MCF 10A (cell line): ENCODE measurements at regions of chr19 and their contacts with region 1.

Region 1: DNA sequence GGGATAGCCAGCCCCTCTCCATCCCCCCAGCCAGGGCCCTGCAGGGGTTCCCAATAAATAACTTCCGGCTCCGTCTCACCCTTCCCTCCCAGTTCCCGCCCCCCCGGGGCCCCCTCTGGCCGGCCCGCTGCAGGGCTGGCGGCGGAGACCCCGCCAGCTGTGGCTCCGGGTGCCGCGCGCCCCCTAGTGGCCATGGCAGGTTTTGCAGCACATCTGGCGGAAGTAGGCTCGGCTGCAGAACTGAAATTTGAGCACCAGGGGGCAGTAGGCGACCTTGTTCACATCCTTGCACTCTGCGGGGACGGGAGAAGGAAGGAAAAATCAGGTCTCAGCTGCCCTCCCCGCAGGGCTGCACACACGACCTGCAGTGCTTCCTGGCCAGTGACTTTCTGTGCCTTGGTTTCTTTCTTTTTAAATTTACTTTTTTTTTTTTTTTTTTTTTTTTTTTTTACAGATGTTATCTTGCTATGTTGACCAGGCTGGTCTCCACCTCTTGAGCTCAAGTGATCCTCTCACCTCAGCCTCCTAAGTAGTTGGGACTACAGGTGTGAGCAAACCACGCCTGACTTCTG is 3.6 kb upstream of the MYO1F start:
- DNase-seq: peak; percentile 82
- H3K4me3 Mint-ChIP-seq: no peak overlapping the region
- H3K27ac Mint-ChIP-seq: no peak overlapping the region
- H3K4me1 Mint-ChIP-seq: peaks cover 10% of the 10 kb centered on the region
- H3K27me3 Mint-ChIP-seq: peaks cover 10% of the 10 kb centered on the region
- CTCF ChIP-seq: peak; percentile 99

Region 2: GRCh38 chr19:8116437-8117293 is 464.1 kb before region 1 on chr19:
- CTCF ChIA-PET with region 1: no interaction called
- POLR2A ChIA-PET with region 1: no interaction called
- intact Hi-C with region 1: no loop called
- DNase-seq: peak; percentile 39
- H3K4me3 Mint-ChIP-seq: no peak overlapping the region
- H3K27ac Mint-ChIP-seq: no peak overlapping the region
- H3K4me1 Mint-ChIP-seq: peaks cover 6% of the 10 kb centered on the region
- H3K27me3 Mint-ChIP-seq: no peaks in the 10 kb centered on the region
- CTCF ChIP-seq: no peak

Region 3: DNA sequence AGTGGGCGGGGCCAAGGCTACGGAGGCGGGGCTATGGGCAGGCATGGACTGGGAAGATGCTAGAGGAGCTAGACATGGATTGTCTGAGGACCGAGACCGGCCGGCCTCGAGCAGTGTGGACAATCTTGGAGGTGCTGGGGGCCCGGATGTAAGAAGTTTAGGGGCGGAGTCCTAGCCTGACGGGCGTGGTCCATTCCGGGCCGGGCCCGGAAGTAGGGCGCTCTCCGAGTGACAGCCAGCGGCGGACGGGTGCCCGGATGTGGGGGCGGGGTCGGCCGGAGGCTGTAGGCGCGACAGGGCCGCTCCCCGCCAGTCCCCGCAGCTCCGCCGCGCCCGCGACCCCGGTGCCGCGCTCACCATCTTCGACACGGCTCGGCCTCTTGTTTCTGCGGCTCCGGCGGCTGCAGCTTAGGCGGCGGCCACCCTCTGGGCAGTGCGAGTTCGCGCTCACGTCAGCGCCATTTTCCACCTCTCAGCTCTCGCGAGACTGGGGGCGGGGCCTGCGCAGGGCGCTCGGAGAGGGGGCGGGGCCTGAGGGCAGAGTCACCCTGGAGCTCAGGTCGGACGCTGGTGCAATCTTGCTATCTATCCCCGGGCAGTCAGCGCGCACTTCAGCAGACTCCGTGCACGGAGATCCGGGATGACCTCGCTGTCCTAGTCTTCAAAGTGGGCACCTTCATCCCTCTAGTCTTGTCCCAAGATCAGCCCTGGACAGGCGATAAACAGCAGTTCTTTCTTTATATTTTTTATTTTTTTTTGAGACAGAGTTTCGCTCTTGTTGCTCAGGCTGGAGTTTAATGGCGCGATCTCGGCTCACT is 66.9 kb before region 1 on chr19 and contains the start of gene ZNF414:
- CTCF ChIA-PET with region 1: interaction called, 28 read pairs
- POLR2A ChIA-PET with region 1: interaction called, 4 read pairs
- intact Hi-C with region 1: no loop called
- DNase-seq: peak; percentile 98
- H3K4me3 Mint-ChIP-seq: peak within 1 kb of the TSS; percentile 85
- H3K27ac Mint-ChIP-seq: peak within 1 kb of the TSS; percentile 99
- H3K4me1 Mint-ChIP-seq: peaks cover 15% of the 10 kb centered on the region
- H3K27me3 Mint-ChIP-seq: no peaks in the 10 kb centered on the region
- CTCF ChIP-seq: no peak
- total RNA-seq, gene ZNF414: 16.3 and 27.2 TPM in 2 replicates

Region 4: DNA sequence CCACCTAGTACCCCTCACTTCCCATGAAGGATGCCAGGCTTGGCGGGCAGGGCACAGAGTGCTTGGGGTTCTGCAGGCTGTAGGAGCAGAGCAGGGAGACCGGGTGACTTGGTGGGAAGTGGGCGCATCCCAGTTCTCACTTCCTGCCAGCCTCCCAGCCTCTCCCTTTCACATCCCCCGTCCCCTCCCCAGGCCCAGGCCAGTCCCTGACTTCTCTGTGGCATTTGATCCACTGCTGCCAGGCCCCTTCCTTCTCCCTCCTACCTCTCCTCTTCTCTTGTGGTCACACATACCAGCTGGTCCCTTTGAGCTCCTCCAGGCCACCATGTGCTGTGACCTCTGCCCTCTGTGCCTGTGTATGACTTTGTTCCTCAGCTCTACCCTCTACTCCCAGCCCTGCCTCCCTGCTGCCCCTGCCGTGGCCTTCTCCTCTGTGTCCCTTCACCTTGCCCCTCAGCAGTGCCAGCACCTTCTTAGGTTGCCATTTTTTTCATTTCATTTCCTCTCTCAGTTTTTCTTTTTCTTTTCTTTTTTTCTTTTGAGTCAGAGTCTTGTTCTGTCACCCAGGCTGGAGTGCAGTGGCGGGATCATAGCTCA is 23.1 kb before region 1 on chr19:
- CTCF ChIA-PET with region 1: interaction called, 33 read pairs
- POLR2A ChIA-PET with region 1: interaction called, 3 read pairs
- intact Hi-C with region 1: no loop called
- DNase-seq: no peak
- H3K4me3 Mint-ChIP-seq: no peak overlapping the region
- H3K27ac Mint-ChIP-seq: no peak overlapping the region
- H3K4me1 Mint-ChIP-seq: no peaks in the 10 kb centered on the region
- H3K27me3 Mint-ChIP-seq: peaks cover 16% of the 10 kb centered on the region
- CTCF ChIP-seq: no peak

Region 5: DNA sequence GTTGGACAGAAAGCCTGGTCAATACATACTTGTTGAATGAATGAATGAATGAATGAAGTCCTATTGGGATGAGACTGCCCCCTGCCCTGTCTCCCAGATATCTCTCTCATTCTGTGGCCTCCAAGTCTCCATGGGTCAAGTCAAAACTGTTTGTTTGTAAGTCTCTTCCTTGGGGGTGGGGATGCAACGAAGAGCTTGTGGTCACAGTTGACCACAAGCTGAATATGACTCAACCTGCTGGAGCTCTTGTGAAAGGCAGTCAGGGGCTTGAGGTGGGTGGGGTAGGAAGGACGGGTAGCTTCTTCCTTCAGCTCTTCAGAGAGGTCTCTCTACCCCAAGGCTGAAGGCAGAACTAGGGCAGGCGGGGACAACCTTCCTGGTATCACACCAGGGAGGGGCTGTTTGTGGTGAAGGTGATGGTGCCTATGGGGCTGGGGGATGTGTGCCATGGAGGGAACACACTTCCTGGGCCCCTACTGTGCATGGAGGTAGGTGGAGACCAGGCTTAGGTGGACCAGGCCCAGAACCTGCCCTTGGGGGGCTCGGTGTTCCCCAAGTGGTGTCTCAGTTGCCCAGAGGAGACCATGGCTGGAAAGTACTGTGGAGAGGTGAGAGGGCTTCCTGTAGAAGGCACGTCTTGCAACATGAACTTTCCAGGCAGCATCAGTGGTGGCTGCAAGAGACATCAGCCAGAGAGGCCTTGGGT is 11.6 kb before region 1 on chr19:
- CTCF ChIA-PET with region 1: interaction called, 89 read pairs
- POLR2A ChIA-PET with region 1: no interaction called
- intact Hi-C with region 1: no loop called
- DNase-seq: peak; percentile 90
- H3K4me3 Mint-ChIP-seq: no peak overlapping the region
- H3K27ac Mint-ChIP-seq: no peak overlapping the region
- H3K4me1 Mint-ChIP-seq: peaks cover 10% of the 10 kb centered on the region
- H3K27me3 Mint-ChIP-seq: peaks cover 10% of the 10 kb centered on the region
- CTCF ChIP-seq: no peak

Region 6: GRCh38 chr19:8592231-8593009 is 11.6 kb after region 1 on chr19:
- CTCF ChIA-PET with region 1: interaction called, 62 read pairs
- POLR2A ChIA-PET with region 1: no interaction called
- intact Hi-C with region 1: no loop called
- DNase-seq: no peak
- H3K4me3 Mint-ChIP-seq: no peak overlapping the region
- H3K27ac Mint-ChIP-seq: no peak overlapping the region
- H3K4me1 Mint-ChIP-seq: peaks cover 6% of the 10 kb centered on the region
- H3K27me3 Mint-ChIP-seq: peaks cover 10% of the 10 kb centered on the region
- CTCF ChIP-seq: no peak

Region 7: GRCh38 chr19:8641908-8642547 is 61.2 kb after region 1 on chr19:
- CTCF ChIA-PET with region 1: interaction called, 4 read pairs
- POLR2A ChIA-PET with region 1: no interaction called
- intact Hi-C with region 1: loop called (anchors 1 kb)
- DNase-seq: peak; percentile 52
- H3K4me3 Mint-ChIP-seq: no peak overlapping the region
- H3K27ac Mint-ChIP-seq: no peak overlapping the region
- H3K4me1 Mint-ChIP-seq: peaks cover 5% of the 10 kb centered on the region
- H3K27me3 Mint-ChIP-seq: no peaks in the 10 kb centered on the region
- CTCF ChIP-seq: peak; percentile 35